ENCODE measurements at regions of chr20 and their contacts with region 1.

Region 1: GRCh38 chr20:38875175-38875993 is 50.8 kb upstream of the FAM83D start:
- DNase-seq: peak in 1 of 2 donors; percentile 15
- ATAC-seq: peak; percentile 35 to 85 (median 74)
- H3K4me3 ChIP-seq: peak overlapping the region in 2 of 10 donors; percentile 1 to 19
- H3K27ac ChIP-seq: peak overlapping the region in 6 of 10 donors; percentile 39 to 77 (median 46)
- H3K4me1 ChIP-seq: peaks cover 4 to 72% (median 37%) of the 10 kb centered on the region in 9 donors
- H3K27me3 ChIP-seq: peaks cover 0 to 32% (median 20%) of the 10 kb centered on the region in 7 donors
- CTCF ChIP-seq: no peak

Region 2: GRCh38 chr20:38805502-38805957 is 69.9 kb before region 1 on chr20 and contains the start of gene PPP1R16B:
- intact Hi-C with region 1: loop called in 2 of 10 experiments (anchors 5 to 10 kb)
- DNase-seq: peak; percentile 62 to 75
- ATAC-seq: peak; percentile 82 to 93 (median 91)
- H3K4me3 ChIP-seq: peak within 1 kb of the TSS; percentile 65 to 84 (median 80)
- H3K27ac ChIP-seq: peak within 1 kb of the TSS; percentile 79 to 93 (median 88)
- H3K4me1 ChIP-seq: peaks cover 4 to 74% (median 41%) of the 10 kb centered on the region in 9 donors
- H3K27me3 ChIP-seq: peaks cover 10 to 45% (median 28%) of the 10 kb centered on the region in 7 donors
- CTCF ChIP-seq: no peak
- total RNA-seq, gene PPP1R16B: 2.7 to 13.8 (median 6.6) TPM